ENCODE measurements at regions of chr6 and their contacts with region 1.

Region 1: GRCh38 chr6:30707281-30707872 is 9.7 kb downstream of the MDC1 start:
- DNase-seq: no peak
- ATAC-seq: no peak
- H3K4me3 Mint-ChIP-seq: no peak overlapping the region
- H3K27ac Mint-ChIP-seq: no peak overlapping the region
- H3K4me1 Mint-ChIP-seq: peaks cover 15% of the 10 kb centered on the region
- H3K27me3 Mint-ChIP-seq: no peaks in the 10 kb centered on the region

Region 2: DNA sequence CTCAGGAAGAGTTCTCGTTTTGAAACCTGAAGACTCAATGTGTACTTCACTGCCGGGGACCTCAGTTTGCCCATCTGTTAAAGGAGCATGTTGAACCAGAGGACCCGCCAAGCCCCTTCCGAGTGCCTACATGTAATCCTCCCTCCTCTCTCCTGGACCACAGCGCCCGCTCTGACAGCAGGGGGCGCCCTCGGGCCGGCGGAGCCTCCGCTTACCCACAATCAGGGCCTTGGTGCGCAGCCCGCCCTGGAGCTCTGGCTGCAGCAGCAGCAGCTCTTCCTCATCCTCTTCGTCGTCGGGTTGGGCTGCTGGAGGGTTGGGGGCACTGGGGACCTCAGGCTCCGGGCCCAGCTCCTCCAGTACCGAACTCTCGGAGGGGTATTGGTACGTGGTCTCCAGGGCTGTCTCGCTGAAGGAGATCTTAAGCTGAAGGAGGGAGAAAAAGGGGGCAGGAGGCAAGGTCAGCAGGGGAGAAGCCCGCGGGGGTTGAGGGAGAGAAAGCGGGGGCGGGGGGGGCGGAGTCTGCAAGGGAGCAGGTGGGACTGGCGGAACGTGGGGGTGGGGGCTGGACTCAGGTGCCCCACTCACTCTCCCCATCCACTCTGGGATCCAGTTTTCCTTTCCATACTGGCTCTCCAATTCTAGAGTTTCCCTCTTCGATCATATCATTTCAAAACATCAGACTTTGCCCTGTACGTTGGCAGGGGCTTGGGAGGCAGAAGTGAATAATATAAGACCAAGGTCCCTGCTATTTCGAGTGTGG is 28.2 kb before region 1 on chr6:
- POLR2A ChIA-PET with region 1: interaction called, 54 read pairs
- DNase-seq: peak; percentile 98
- ATAC-seq: peak; percentile 42
- H3K4me3 Mint-ChIP-seq: peak overlapping the region; percentile 91
- H3K27ac Mint-ChIP-seq: peak overlapping the region; percentile 99
- H3K4me1 Mint-ChIP-seq: peaks cover 24% of the 10 kb centered on the region
- H3K27me3 Mint-ChIP-seq: no peaks in the 10 kb centered on the region

Region 3: DNA sequence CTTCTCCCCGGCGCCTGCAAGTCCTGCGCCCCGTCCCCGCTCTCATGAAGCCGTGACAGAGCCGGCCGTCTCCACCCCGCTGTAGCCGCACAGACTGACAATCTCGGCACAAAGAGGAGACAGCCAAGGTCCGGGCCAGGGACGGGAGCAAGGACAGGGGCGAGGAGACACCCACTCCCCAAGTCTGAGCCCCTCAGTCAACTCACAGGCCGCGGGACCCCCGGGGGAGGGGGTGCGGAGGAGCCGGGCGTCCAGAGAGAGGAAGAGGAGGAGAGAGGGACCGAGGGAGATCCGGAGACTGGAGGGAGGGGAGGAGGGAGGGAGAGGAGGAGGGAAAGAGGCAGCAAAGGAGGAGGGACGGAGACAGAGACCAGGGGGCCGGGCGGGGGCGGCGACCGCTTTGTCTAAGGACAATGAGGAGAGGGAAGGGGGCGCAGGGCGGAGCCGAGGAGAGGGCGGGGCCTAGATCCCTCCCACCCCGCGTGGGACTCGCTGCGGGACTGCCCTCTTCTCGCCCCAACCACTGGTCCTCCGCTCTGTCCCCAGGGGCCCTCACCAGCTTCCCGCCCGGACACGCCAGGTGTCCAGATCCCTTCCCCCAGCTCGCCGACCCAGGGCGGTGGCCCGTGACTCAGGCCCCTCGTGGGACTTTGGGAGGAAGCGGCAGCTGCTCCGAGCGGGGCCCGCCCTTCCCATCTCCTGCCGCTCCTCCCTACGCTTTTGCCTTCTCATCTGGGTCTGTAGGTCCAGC is 20.3 kb before region 1 on chr6:
- POLR2A ChIA-PET with region 1: interaction called, 54 read pairs
- DNase-seq: peak; percentile 83
- ATAC-seq: peak; percentile 18
- H3K4me3 Mint-ChIP-seq: peak overlapping the region; percentile 91
- H3K27ac Mint-ChIP-seq: peak overlapping the region; percentile 99
- H3K4me1 Mint-ChIP-seq: peaks cover 36% of the 10 kb centered on the region
- H3K27me3 Mint-ChIP-seq: no peaks in the 10 kb centered on the region

Region 4: DNA sequence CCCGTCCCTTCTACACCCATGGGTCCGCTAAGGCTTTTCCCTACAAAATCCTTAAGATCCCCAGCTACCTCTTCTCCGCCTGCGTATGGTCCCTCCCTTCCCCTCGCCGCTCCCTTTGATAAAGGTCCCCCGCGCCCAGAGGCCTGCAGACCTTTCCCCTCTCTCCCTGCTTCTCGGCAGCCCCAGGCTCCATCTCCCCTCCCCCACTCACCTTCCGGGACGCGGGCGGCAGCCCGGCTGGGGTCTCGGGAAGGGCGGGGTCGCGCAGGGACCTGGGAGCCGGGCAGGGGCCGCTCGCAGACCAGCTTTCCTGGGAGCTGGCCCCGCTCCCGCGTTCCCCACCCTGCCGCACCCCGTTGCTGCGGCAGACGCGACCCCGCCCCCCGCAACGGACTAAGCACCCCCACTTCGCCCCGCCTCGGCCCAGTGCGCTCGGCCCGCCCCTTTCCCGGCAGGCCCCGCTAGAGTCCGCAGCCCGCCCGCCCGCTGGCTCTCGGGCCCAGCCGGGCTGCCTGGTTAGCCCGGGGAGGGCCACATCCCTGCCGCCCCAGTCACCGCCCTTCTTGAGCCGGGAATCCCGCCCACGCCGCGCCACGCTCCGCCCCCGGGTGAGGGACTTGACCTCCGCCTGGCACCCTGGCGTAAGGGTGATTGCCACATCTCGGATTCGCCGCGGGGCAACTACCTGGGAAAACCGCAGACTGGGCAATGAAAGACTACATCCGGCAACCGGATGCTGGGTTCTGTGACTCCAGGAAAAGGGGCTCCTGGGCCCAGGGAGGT is 35.1 kb after region 1 on chr6 and contains the start of gene FLOT1:
- POLR2A ChIA-PET with region 1: no interaction called
- DNase-seq: peak; percentile 98
- ATAC-seq: peak; percentile 82
- H3K4me3 Mint-ChIP-seq: peak within 1 kb of the TSS; percentile 98
- H3K27ac Mint-ChIP-seq: peak within 1 kb of the TSS; percentile 96
- H3K4me1 Mint-ChIP-seq: peaks cover 48% of the 10 kb centered on the region
- H3K27me3 Mint-ChIP-seq: no peaks in the 10 kb centered on the region
- total RNA-seq, gene FLOT1: 261 to 271 TPM